ENCODE measurements at regions of chr19 and their contacts with region 1.

Region 1: GRCh38 chr19:21020298-21021227 is at the start of gene ZNF430:
- DNase-seq: peak; percentile 96
- ATAC-seq: peak; percentile 95
- H3K4me3 Mint-ChIP-seq: peak within 1 kb of the TSS; percentile 96
- H3K27ac Mint-ChIP-seq: peak within 1 kb of the TSS; percentile 99
- H3K4me1 Mint-ChIP-seq: peaks cover 40% of the 10 kb centered on the region
- H3K27me3 Mint-ChIP-seq: no peaks in the 10 kb centered on the region
- total RNA-seq, gene ZNF430: 14.7 to 17.1 TPM

Region 2: GRCh38 chr19:19865739-19866481 is 1154.7 kb before region 1 on chr19 and contains the start of gene ZNF253:
- CTCF ChIA-PET with region 1: no interaction called
- POLR2A ChIA-PET with region 1: no interaction called
- intact Hi-C with region 1: loop called in 1 of 2 experiments (anchors 10 kb)
- DNase-seq: peak; percentile 98
- ATAC-seq: peak; percentile 93
- H3K4me3 Mint-ChIP-seq: peak within 1 kb of the TSS; percentile 88
- H3K27ac Mint-ChIP-seq: peak within 1 kb of the TSS; percentile 98
- H3K4me1 Mint-ChIP-seq: peaks cover 21% of the 10 kb centered on the region
- H3K27me3 Mint-ChIP-seq: no peaks in the 10 kb centered on the region
- total RNA-seq, gene ZNF253: 16.1 to 25.1 TPM

Region 3: DNA sequence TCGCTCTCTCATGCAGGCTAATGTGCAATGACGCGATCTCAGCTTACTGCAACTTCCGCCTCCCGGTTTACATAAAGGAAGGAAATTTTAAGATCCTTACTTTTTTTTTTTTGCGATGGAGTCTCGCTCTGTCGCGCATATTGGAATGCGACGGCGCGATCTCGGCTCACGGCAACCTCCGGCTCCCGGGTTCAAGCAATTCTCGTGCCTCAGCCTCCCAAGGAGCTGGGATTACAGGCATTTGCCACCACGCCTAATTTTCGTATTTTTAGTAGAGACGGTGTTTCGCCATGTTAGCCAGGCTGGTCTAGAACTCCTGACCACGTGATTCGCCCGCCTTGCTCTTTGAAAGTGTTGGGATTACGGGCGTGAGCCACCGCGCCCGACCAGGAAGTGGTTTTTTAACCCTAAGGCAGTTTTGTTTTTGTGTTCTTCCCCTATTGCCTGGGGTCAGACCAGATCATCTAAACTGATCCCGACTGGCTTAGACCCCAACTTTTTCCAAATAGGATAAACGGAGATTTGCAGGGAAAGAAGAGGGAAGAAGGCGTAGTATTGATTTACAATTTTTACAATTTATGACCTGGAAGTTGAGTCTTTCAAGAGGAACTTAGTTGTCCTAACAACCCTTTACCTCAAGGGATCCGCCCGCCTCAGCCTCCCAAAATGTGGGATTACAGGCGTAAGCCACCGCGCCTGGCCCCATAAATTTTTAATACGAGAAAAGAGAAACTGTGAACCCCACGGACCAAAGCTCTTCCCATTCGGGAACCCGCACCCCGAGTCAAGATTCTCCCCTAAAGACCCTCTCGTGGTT is 597.0 kb before region 1 on chr19:
- CTCF ChIA-PET with region 1: no interaction called
- POLR2A ChIA-PET with region 1: interaction called, 3 read pairs
- intact Hi-C with region 1: loop called in 1 of 2 experiments (anchors 1 kb)
- DNase-seq: peak; percentile 61
- ATAC-seq: no peak
- H3K4me3 Mint-ChIP-seq: peak overlapping the region; percentile 96
- H3K27ac Mint-ChIP-seq: peak overlapping the region; percentile 99
- H3K4me1 Mint-ChIP-seq: peaks cover 9% of the 10 kb centered on the region
- H3K27me3 Mint-ChIP-seq: no peaks in the 10 kb centered on the region

Region 4: DNA sequence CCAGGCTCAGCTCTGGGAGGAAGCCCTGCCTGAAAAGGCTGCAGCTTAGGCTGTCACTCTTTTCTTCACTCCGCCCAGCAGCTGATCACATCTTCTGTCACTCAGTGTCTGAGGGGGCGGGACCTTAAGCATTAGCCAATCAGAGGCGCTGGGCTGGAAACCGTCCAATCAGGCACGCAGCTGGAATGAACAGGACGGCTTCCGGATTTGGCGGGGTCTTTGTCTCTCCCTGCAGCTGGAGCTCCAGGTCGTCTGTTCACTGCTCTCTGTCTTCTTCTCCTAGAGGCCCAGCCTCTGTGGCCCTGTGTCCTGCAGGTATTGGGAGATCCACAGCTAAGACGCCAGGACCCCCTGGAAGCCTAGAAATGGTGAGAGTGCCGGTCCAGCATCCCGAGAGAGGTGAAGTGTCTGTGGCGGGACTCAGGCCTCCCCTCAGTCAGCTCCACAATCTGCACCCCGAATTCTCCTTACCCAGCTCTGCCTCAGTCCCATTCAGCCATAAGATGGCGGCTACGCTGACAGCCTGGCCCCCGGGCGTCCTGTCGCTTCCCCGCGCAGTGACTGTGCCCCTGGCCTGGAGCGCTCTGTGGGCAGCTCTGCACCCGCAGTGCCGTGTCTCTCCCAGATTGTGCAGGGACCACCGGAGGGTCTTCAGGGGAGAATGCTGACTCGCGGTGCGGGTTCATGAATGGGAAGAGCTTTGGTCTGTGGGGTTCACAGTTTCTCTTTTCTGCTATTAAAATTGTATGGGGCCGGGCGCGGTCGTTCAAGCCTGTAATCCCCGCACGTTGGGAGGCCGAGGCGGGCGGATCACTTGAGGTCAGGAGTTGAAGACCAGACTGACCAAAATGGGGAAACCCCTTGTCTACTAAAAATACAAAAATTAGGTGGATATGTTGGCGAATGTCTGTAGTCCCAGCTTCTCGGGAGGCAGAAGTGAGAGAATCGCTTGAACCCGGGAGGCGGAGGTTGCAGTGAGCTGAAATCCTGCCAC is 244.2 kb before region 1 on chr19 and contains the start of gene ZNF66:
- CTCF ChIA-PET with region 1: interaction called, 3 read pairs
- POLR2A ChIA-PET with region 1: no interaction called
- intact Hi-C with region 1: loop called (anchors 1 to 5 kb)
- DNase-seq: peak; percentile 96
- ATAC-seq: peak; percentile 98
- H3K4me3 Mint-ChIP-seq: peak within 1 kb of the TSS; percentile 98
- H3K27ac Mint-ChIP-seq: peak within 1 kb of the TSS; percentile 98
- H3K4me1 Mint-ChIP-seq: peaks cover 7% of the 10 kb centered on the region
- H3K27me3 Mint-ChIP-seq: no peaks in the 10 kb centered on the region
- total RNA-seq, gene ZNF66: 8.8 to 11.1 TPM

Region 5: GRCh38 chr19:20964798-20965197 is 55.8 kb before region 1 on chr19:
- CTCF ChIA-PET with region 1: no interaction called
- POLR2A ChIA-PET with region 1: no interaction called
- intact Hi-C with region 1: no loop called
- DNase-seq: peak; percentile 37
- ATAC-seq: no peak
- H3K4me3 Mint-ChIP-seq: no peak overlapping the region
- H3K27ac Mint-ChIP-seq: no peak overlapping the region
- H3K4me1 Mint-ChIP-seq: no peaks in the 10 kb centered on the region
- H3K27me3 Mint-ChIP-seq: no peaks in the 10 kb centered on the region

Region 6: DNA sequence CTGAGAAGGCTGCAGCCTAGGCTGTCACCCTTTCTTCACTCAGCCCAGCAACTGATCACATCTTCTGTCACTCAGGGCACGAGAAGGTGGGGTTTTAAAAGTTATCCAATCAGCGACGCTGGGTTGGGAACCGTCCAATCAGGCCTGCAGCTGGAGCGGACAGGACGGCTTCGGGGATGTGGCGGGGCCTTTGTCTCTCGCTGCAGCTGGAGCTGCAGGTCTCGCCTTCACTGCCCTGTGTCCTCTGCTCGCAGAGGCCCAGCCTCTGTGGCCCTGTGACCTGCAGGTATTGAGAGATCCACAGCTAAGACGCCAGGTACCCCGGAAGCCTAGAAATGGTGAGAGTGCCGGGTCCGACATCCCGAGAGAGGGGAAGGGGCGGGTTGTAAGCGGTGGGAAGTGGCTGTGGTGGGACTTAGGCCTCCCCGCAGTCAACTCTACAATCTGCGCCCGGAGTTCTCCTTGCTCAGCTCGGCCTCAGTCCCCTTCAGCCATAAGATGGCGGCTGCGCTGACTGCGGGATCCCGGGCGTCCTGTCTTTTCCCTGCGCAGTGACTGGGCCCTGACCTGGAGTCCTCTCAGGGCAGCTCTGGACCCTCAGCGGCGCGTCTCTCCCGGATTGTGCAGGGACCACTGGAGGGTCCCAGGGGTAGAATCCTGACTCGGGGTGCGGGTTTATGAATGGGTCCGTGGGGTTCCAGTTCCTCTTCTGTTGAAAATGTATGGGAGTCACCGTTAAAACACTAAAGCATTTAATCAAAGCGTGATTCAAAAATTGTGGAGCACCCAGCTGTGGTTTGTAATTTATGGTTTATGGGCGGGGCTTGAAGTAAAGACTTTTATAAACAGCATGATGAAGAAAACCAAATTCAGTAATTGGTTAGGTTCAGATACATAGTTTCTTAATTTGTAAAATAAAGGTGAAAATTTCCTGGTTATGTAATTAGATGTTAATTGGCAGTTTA is 61.7 kb after region 1 on chr19 and contains the start of gene ZNF714:
- CTCF ChIA-PET with region 1: no interaction called
- POLR2A ChIA-PET with region 1: interaction called, 4 read pairs
- intact Hi-C with region 1: loop called (anchors 1 to 2 kb)
- DNase-seq: peak; percentile 89
- ATAC-seq: peak; percentile 98
- H3K4me3 Mint-ChIP-seq: peak within 1 kb of the TSS; percentile 99
- H3K27ac Mint-ChIP-seq: peak within 1 kb of the TSS; percentile 97
- H3K4me1 Mint-ChIP-seq: peaks cover 24% of the 10 kb centered on the region
- H3K27me3 Mint-ChIP-seq: no peaks in the 10 kb centered on the region
- total RNA-seq, gene ZNF714: 17.4 to 20.0 TPM

Region 7: GRCh38 chr19:21396893-21397572 is 376.5 kb after region 1 on chr19 and contains the start of gene ZNF493:
- CTCF ChIA-PET with region 1: no interaction called
- POLR2A ChIA-PET with region 1: no interaction called
- intact Hi-C with region 1: loop called in 1 of 2 experiments (anchors 1 kb)
- DNase-seq: peak; percentile 95
- ATAC-seq: peak; percentile 100
- H3K4me3 Mint-ChIP-seq: peak within 1 kb of the TSS; percentile 98
- H3K27ac Mint-ChIP-seq: peak within 1 kb of the TSS; percentile 92
- H3K4me1 Mint-ChIP-seq: peaks cover 32% of the 10 kb centered on the region
- H3K27me3 Mint-ChIP-seq: no peaks in the 10 kb centered on the region
- total RNA-seq, gene ZNF493: 11.9 to 12.8 TPM

Region 8: DNA sequence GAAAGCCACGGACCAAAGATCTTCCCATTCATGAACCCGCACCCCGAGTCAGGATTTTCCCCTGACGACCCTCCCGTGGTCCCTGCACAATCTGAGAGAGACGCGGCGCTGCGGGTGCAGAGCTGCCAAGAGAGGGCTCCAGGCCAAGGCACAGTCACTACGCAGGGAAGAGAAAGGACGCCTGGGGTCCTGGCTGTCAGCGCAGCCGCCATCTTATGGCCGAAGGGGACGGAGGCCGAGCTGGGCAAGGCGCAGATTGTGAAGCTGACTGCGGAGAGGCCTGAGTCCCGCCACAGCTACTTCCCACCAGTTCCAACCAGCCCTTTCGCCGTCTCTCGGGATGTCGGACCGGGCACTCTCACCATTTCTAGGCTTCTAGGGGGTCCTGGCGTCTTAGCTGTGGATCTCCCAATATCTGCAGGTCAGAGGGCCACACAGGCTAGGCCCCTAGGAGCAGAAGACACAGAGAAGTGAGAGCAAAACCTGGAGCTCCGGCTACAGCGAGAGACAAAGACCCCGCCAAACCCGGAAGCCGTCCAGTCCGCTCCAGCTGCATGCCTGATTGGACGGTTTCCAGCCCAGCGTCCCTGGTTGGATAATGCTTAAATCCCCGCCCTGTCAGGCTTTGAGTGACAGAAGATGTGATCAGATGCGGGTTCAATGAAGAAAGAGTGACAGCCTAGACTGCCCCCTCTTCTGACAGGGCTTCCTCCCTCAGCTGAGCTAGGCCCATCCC is 746.7 kb after region 1 on chr19 and contains the start of gene ZNF100:
- CTCF ChIA-PET with region 1: no interaction called
- POLR2A ChIA-PET with region 1: interaction called, 3 read pairs
- intact Hi-C with region 1: loop called (anchors 5 to 10 kb)
- DNase-seq: peak; percentile 94
- ATAC-seq: peak; percentile 98
- H3K4me3 Mint-ChIP-seq: peak within 1 kb of the TSS; percentile 98
- H3K27ac Mint-ChIP-seq: peak within 1 kb of the TSS; percentile 95
- H3K4me1 Mint-ChIP-seq: peaks cover 30% of the 10 kb centered on the region
- H3K27me3 Mint-ChIP-seq: no peaks in the 10 kb centered on the region
- total RNA-seq, gene ZNF100: 24.7 to 27.0 TPM

Measured in activated CD4-positive, alpha-beta T cell treated with anti-CD3 and anti-CD28 coated beads for 36 hours (primary cell).